Posterior vena cava (tissue), 2 donors: ENCODE measurements at regions of chr2 and their contacts with region 1.

Region 1: DNA sequence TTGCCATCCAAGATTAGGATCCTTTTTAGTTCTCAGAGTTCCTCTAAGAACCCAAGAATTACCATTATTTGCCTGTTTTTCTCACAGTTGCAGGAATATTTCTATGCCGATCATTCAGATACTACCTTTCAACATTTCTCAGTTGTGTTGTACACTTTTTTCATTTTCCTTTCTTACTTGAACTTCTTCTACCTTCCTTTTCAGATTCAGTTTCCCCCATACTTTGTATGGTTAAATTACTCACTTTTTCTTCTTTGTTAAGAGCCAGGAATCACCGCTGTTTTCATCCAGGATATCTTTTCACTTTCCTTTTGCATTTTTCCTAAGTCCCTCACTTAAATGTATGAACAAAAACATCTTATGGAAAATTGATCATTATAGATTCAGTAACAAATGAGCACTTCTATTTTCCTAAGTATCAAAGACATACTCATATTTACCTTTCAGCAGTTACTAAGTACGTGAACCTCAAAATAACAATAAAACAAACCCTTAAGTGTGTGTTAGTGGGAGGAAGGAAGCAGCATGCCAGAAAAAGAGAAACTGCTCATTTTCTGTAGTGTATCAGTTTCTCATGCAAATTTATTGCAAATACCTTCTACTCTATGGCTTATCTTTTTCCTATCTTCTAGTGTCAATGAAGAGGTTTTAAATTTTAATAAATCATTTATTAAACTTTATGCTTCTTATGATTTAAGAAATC is 64.3 kb upstream of the STAT1 start:
- DNase-seq: no peak

Region 2: GRCh38 chr2:191051825-191052778 is 26.2 kb before region 1 on chr2:
- intact Hi-C with region 1: loop called in 1 of 2 experiments (anchors 1 kb)
- DNase-seq: no peak

Region 3: GRCh38 chr2:191103774-191104173 is 25.5 kb after region 1 on chr2:
- intact Hi-C with region 1: loop called in 1 of 2 experiments (anchors 2 kb)
- DNase-seq: no peak